Endothelial cell of umbilical vein (primary cell): ENCODE measurements at regions of chr12 and their contacts with region 1.

Region 1: GRCh38 chr12:55926738-55927587 is 731 bp downstream of the PYM1 start:
- DNase-seq: peak; percentile 95
- H3K4me3 ChIP-seq: peak overlapping the region; percentile 55 to 98 (median 81)
- H3K27ac ChIP-seq: peak overlapping the region; percentile 40
- H3K4me1 ChIP-seq: peaks cover 28% of the 10 kb centered on the region
- H3K27me3 ChIP-seq: no peaks in the 10 kb centered on the region
- CTCF ChIP-seq: peak; percentile 69 to 74
- POLR2A ChIP-seq: peak; percentile 58

Region 2: DNA sequence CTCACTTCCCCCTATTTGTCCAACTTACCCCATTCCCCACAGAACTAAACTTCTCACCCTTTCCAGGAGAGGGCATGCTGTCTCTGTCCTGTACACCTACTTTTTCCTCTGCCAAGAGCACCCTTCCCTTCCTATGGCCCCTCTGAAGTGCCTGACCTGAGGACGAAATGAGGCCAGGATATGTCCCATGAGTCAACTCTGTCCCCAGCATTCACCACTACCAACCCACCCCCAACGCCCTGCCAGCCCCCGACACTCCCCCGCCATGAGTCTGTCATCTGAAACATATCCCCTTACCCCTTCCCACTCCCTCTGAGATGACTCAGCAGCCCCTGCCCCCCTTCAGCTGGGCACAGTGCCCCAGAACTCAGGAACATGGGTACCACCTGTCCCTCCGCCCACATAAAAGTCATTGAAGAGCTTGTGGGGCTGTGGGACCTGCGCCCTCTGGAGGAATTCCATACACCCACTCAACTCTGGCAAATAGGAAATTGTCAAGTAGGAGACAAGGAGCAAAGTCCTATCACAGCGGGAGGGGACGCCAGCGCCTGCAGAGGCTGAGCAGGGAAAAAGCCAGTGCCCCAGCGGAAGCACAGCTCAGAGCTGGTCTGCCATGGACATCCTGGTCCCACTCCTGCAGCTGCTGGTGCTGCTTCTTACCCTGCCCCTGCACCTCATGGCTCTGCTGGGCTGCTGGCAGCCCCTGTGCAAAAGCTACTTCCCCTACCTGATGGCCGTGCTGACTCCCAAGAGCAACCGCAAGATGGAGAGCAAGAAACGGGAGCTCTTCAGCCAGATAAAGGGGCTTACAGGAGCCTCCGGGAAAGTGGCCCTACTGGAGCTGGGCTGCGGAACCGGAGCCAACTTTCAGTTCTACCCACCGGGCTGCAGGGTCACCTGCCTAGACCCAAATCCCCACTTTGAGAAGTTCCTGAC is 245.6 kb before region 1 on chr12:
- CTCF ChIA-PET with region 1: no interaction called
- POLR2A ChIA-PET with region 1: no interaction called
- dilution Hi-C with region 1: no loop called
- intact Hi-C with region 1: no loop called
- DNase-seq: peak; percentile 44
- H3K4me3 ChIP-seq: no peak overlapping the region
- H3K27ac ChIP-seq: no peak overlapping the region
- H3K4me1 ChIP-seq: no peaks in the 10 kb centered on the region
- H3K27me3 ChIP-seq: peaks cover 0 to 5% of the 10 kb centered on the region in 2 experiments
- CTCF ChIP-seq: peak; percentile 14 to 43
- POLR2A ChIP-seq: no peak

Region 3: GRCh38 chr12:55817346-55818139 is 109.4 kb before region 1 on chr12 and contains the starts of genes ORMDL2 and SARNP:
- CTCF ChIA-PET with region 1: interaction called, 30 read pairs
- POLR2A ChIA-PET with region 1: interaction called, 3 read pairs
- dilution Hi-C with region 1: no loop called
- intact Hi-C with region 1: loop called (anchors 1 kb)
- DNase-seq: peak; percentile 100
- H3K4me3 ChIP-seq: peak within 1 kb of the TSS; percentile 95 to 99 (median 98)
- H3K27ac ChIP-seq: peak within 1 kb of the TSS; percentile 81
- H3K4me1 ChIP-seq: peaks cover 16% of the 10 kb centered on the region
- H3K27me3 ChIP-seq: no peaks in the 10 kb centered on the region
- CTCF ChIP-seq: no peak
- POLR2A ChIP-seq: peak; percentile 78
- total RNA-seq, gene ORMDL2: 55.0 and 57.8 TPM in 2 replicates
- total RNA-seq, gene SARNP: 88.1 and 101 TPM in 2 replicates

Region 4: GRCh38 chr12:55847603-55848291 is 79.2 kb before region 1 on chr12:
- CTCF ChIA-PET with region 1: interaction called, 4 read pairs
- POLR2A ChIA-PET with region 1: interaction called, 9 read pairs
- dilution Hi-C with region 1: no loop called
- intact Hi-C with region 1: loop called (anchors 1 kb)
- DNase-seq: peak; percentile 94
- H3K4me3 ChIP-seq: no peak overlapping the region
- H3K27ac ChIP-seq: peak overlapping the region; percentile 99
- H3K4me1 ChIP-seq: peaks cover 18% of the 10 kb centered on the region
- H3K27me3 ChIP-seq: no peaks in the 10 kb centered on the region
- CTCF ChIP-seq: no peak
- POLR2A ChIP-seq: peak; percentile 78

Region 5: GRCh38 chr12:55940065-55940732 is 13.2 kb after region 1 on chr12:
- CTCF ChIA-PET with region 1: interaction called, 37 read pairs
- POLR2A ChIA-PET with region 1: no interaction called
- dilution Hi-C with region 1: no loop called
- intact Hi-C with region 1: loop called (anchors 1 kb)
- DNase-seq: peak; percentile 85
- H3K4me3 ChIP-seq: no peak overlapping the region
- H3K27ac ChIP-seq: no peak overlapping the region
- H3K4me1 ChIP-seq: no peaks in the 10 kb centered on the region
- H3K27me3 ChIP-seq: no peaks in the 10 kb centered on the region
- CTCF ChIP-seq: peak; percentile 89 to 98
- POLR2A ChIP-seq: no peak

Region 6: GRCh38 chr12:56041552-56042429 is 114.8 kb after region 1 on chr12 and contains the start of gene RPS26:
- CTCF ChIA-PET with region 1: interaction called, 3 read pairs
- POLR2A ChIA-PET with region 1: no interaction called
- dilution Hi-C with region 1: no loop called
- intact Hi-C with region 1: loop called (anchors 5 kb)
- DNase-seq: peak; percentile 100
- H3K4me3 ChIP-seq: peak within 1 kb of the TSS; percentile 84 to 100 (median 87)
- H3K27ac ChIP-seq: peak within 1 kb of the TSS; percentile 95
- H3K4me1 ChIP-seq: peaks cover 17% of the 10 kb centered on the region
- H3K27me3 ChIP-seq: no peaks in the 10 kb centered on the region
- CTCF ChIP-seq: peak in 1 of 2 donors; percentile 46
- POLR2A ChIP-seq: peak; percentile 99
- total RNA-seq, gene RPS26: 57.3 and 66.7 TPM in 2 replicates

Region 7: DNA sequence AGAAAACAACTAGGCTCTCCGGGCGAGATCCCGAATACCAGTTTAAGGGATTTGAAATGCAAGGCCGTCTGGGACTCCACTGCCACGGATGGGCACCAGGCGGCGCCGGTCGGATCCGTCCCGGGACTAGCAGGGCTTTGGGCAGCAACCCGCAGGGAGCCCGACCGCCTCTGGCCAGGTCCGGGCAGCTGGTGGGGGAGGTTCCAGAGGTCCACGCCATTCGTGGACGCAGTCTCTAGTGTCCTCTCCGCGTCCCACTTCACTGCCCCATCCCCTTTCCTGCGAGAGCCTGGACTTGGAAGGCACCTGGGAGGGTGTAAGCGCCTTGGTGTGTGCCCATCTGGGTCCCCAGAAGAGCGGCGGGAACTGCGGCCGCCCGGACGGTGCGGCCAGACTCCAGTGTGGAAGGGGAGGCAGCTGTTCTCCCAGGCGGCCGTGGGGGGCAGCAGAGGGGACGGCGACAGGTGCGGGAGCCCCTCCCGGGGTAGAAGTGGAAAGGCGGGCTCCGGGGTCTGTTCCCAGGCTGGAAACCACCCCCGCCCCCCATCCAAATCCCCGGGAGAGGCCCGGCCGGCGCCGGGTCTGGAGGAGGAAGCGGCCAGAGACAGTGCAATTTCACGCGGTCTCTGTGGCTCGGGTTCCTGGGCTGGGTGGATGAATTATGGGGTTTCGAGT is 152.2 kb after region 1 on chr12:
- CTCF ChIA-PET with region 1: no interaction called
- POLR2A ChIA-PET with region 1: no interaction called
- dilution Hi-C with region 1: no loop called
- intact Hi-C with region 1: no loop called
- DNase-seq: peak; percentile 93
- H3K4me3 ChIP-seq: peak overlapping the region; percentile 31 to 58 (median 36)
- H3K27ac ChIP-seq: no peak overlapping the region
- H3K4me1 ChIP-seq: peaks cover 8% of the 10 kb centered on the region
- H3K27me3 ChIP-seq: peaks cover 2 to 4% of the 10 kb centered on the region in 2 experiments
- CTCF ChIP-seq: peak; percentile 81 to 82
- POLR2A ChIP-seq: no peak